CD8-positive, alpha-beta memory T cell (primary cell): ENCODE measurements at regions of chr1 and their contacts with region 1.

Region 1: GRCh38 chr1:178310685-178311105 is 186.1 kb downstream of the CLEC20A start:
- DNase-seq: peak in 2 of 5 donors; percentile 4 to 15
- H3K4me3 ChIP-seq: no peak overlapping the region
- H3K4me3 Mint-ChIP-seq: no peak overlapping the region
- H3K27ac ChIP-seq: no peak overlapping the region
- H3K27ac Mint-ChIP-seq: no peak overlapping the region
- H3K4me1 ChIP-seq: no peaks in the 10 kb centered on the region
- H3K4me1 Mint-ChIP-seq: no peaks in the 10 kb centered on the region
- H3K27me3 ChIP-seq: no peaks in the 10 kb centered on the region
- H3K27me3 Mint-ChIP-seq: no peaks in the 10 kb centered on the region

Region 2: GRCh38 chr1:178300352-178300699 is 10.4 kb before region 1 on chr1:
- CTCF ChIA-PET with region 1: interaction called, 11 read pairs
- POLR2A ChIA-PET with region 1: no interaction called
- DNase-seq: no peak
- H3K4me3 ChIP-seq: no peak overlapping the region
- H3K4me3 Mint-ChIP-seq: no peak overlapping the region
- H3K27ac ChIP-seq: no peak overlapping the region
- H3K27ac Mint-ChIP-seq: no peak overlapping the region
- H3K4me1 ChIP-seq: no peaks in the 10 kb centered on the region
- H3K4me1 Mint-ChIP-seq: no peaks in the 10 kb centered on the region
- H3K27me3 ChIP-seq: no peaks in the 10 kb centered on the region
- H3K27me3 Mint-ChIP-seq: no peaks in the 10 kb centered on the region